Activated CD8-positive, alpha-beta T cell treated with anti-CD3 and anti-CD28 coated beads for 36 hours (primary cell): ENCODE measurements at regions of chr1 and their contacts with region 1.

Region 1: GRCh38 chr1:23809751-23810171 is 9.2 kb upstream of the GALE start:
- DNase-seq: peak; percentile 88
- ATAC-seq: peak; percentile 96
- H3K4me3 Mint-ChIP-seq: no peak overlapping the region
- H3K27ac Mint-ChIP-seq: no peak overlapping the region
- H3K4me1 Mint-ChIP-seq: peaks cover 9% of the 10 kb centered on the region
- H3K27me3 Mint-ChIP-seq: no peaks in the 10 kb centered on the region
- CTCF ChIP-seq: peak; percentile 79

Region 2: GRCh38 chr1:23772049-23772853 is 37.5 kb before region 1 on chr1:
- CTCF ChIA-PET with region 1: interaction called, 42 read pairs
- POLR2A ChIA-PET with region 1: no interaction called
- intact Hi-C with region 1: no loop called
- DNase-seq: peak; percentile 95
- ATAC-seq: peak; percentile 99
- H3K4me3 Mint-ChIP-seq: no peak overlapping the region
- H3K27ac Mint-ChIP-seq: no peak overlapping the region
- H3K4me1 Mint-ChIP-seq: peaks cover 32% of the 10 kb centered on the region
- H3K27me3 Mint-ChIP-seq: no peaks in the 10 kb centered on the region
- CTCF ChIP-seq: peak; percentile 90

Region 3: GRCh38 chr1:23825076-23825761 is 15.5 kb after region 1 on chr1 and contains the start of gene HMGCL:
- CTCF ChIA-PET with region 1: interaction called, 73 read pairs
- POLR2A ChIA-PET with region 1: interaction called, 8 read pairs
- intact Hi-C with region 1: no loop called
- DNase-seq: peak; percentile 94
- ATAC-seq: peak; percentile 98
- H3K4me3 Mint-ChIP-seq: peak within 1 kb of the TSS; percentile 97
- H3K27ac Mint-ChIP-seq: peak within 1 kb of the TSS; percentile 96
- H3K4me1 Mint-ChIP-seq: peaks cover 20% of the 10 kb centered on the region
- H3K27me3 Mint-ChIP-seq: no peaks in the 10 kb centered on the region
- CTCF ChIP-seq: no peak
- total RNA-seq, gene HMGCL: 44.9 to 46.0 TPM

Region 4: DNA sequence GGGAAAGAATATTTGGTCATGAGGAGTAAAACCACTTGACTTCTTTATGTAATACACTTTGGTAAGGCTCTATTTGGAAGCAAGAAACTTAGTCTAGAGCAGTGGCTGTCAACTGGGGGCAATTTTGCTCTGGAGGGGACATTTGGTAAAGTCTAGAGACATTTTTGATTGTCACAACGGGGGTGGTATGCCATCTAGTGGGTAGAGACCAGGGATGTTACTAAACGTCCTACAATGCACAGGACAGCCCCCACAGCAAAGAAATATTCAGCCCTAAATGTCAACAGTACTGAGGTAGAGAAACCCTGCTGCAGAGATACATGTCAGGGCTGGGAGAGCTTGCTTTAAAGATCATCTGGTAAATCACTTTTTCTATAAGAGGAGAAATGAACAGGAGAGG is 44.8 kb after region 1 on chr1:
- CTCF ChIA-PET with region 1: interaction called, 25 read pairs
- POLR2A ChIA-PET with region 1: no interaction called
- intact Hi-C with region 1: no loop called
- DNase-seq: peak; percentile 42
- ATAC-seq: peak; percentile 45
- H3K4me3 Mint-ChIP-seq: no peak overlapping the region
- H3K27ac Mint-ChIP-seq: no peak overlapping the region
- H3K4me1 Mint-ChIP-seq: no peaks in the 10 kb centered on the region
- H3K27me3 Mint-ChIP-seq: no peaks in the 10 kb centered on the region
- CTCF ChIP-seq: peak; percentile 23

Region 5: GRCh38 chr1:23878668-23879067 is 68.9 kb after region 1 on chr1:
- CTCF ChIA-PET with region 1: interaction called, 16 read pairs
- POLR2A ChIA-PET with region 1: no interaction called
- intact Hi-C with region 1: no loop called
- DNase-seq: no peak
- ATAC-seq: no peak
- H3K4me3 Mint-ChIP-seq: no peak overlapping the region
- H3K27ac Mint-ChIP-seq: no peak overlapping the region
- H3K4me1 Mint-ChIP-seq: no peaks in the 10 kb centered on the region
- H3K27me3 Mint-ChIP-seq: no peaks in the 10 kb centered on the region
- CTCF ChIP-seq: no peak

Region 6: DNA sequence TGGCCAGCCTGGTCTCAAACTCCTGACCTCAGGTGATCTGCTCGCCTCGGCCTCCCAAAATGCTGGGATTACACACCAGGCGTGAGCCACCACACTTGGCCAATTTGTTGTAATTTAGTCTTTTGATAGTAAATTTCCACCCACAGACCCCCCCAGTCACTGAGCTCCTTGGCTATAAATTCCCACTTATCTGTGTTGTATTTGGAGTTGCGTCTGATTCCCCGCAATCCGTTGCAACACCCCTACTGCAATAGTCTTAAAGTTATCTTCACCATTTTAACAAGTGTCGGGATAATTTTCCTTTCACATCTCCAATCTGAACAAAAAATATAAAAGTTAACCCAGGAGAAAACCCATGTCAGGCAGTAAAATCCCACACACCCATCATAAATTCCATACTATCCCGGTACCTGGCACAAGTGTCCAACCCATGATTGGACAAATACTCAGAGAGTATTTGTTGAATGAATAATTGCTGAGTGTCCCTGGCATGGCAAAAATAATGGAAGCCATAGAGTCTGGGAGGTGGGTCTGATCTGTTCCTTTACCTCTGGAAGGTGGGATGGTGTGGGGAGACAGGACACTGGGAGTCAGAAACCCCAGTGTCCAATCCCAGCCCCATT is 112.7 kb after region 1 on chr1:
- CTCF ChIA-PET with region 1: interaction called, 73 read pairs
- POLR2A ChIA-PET with region 1: no interaction called
- intact Hi-C with region 1: loop called (anchors 2 kb)
- DNase-seq: no peak
- ATAC-seq: no peak
- H3K4me3 Mint-ChIP-seq: no peak overlapping the region
- H3K27ac Mint-ChIP-seq: no peak overlapping the region
- H3K4me1 Mint-ChIP-seq: peaks cover 3% of the 10 kb centered on the region
- H3K27me3 Mint-ChIP-seq: no peaks in the 10 kb centered on the region
- CTCF ChIP-seq: no peak